CD4-positive, alpha-beta memory T cell (primary cell): ENCODE measurements at regions of chr1 and their contacts with region 1.

Region 1: GRCh38 chr1:169601093-169601881 is 15.0 kb upstream of the F5 start:
- DNase-seq: peak in 4 of 5 donors; percentile 21 to 34 (median 30)
- H3K4me3 ChIP-seq: no peak overlapping the region
- H3K4me3 Mint-ChIP-seq: peak overlapping the region in 4 of 8 donors; percentile 15 to 66 (median 20)
- H3K27ac ChIP-seq: no peak overlapping the region
- H3K27ac Mint-ChIP-seq: peak overlapping the region; percentile 39 to 86 (median 67)
- H3K4me1 ChIP-seq: peaks cover 53% of the 10 kb centered on the region
- H3K4me1 Mint-ChIP-seq: peaks cover 38 to 58% (median 49%) of the 10 kb centered on the region in 4 donors
- H3K27me3 ChIP-seq: no peaks in the 10 kb centered on the region
- H3K27me3 Mint-ChIP-seq: no peaks in the 10 kb centered on the region

Region 2: DNA sequence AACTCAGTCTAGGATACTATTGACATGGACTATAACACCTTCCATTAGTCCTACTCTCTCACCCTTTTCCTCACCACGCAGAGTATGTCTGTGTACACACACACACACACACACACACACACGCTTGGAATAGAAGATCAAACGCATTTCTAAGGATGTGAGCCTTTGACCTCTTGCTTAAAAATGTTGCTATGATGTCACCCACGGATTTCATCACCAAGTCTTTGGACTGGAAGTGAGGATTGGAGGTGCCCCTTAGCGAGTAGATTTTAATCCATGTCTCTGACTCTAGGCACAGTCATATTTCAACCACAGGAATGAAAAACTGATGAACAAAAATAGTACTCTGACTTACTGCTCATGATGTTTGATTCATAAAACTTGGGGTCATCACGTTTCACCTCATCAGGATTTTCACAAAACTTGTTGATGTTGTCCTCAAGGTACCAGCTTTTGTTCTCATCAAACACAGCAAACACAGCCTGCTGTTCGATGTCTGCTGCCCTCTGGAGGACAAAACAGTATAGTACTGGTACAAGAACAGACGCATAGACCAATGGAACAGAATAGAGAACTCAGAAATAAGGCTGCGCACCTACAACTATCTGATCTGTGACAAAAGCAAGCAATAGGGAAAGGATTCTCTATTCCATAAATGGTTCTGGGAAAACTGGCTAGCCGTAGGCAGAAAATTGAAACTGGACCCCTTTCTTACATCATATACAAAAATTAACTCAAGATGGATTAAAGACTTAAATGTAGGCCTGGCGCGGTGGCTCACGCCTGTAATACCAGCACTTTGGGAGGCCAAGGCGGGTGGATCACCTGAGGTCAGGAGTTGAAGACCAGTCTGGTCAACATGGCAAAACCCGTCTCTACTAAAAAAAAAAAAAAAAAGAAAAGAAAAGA is 54.9 kb before region 1 on chr1:
- CTCF ChIA-PET with region 1: interaction called, 59 read pairs
- POLR2A ChIA-PET with region 1: no interaction called
- intact Hi-C with region 1: loop called (anchors 1 kb)
- DNase-seq: peak; percentile 65 to 68 (median 66)
- H3K4me3 ChIP-seq: no peak overlapping the region
- H3K4me3 Mint-ChIP-seq: no peak overlapping the region
- H3K27ac ChIP-seq: no peak overlapping the region
- H3K27ac Mint-ChIP-seq: no peak overlapping the region
- H3K4me1 ChIP-seq: no peaks in the 10 kb centered on the region
- H3K4me1 Mint-ChIP-seq: peaks cover 0 to 2% (median under 1%) of the 10 kb centered on the region in 4 donors
- H3K27me3 ChIP-seq: no peaks in the 10 kb centered on the region
- H3K27me3 Mint-ChIP-seq: no peaks in the 10 kb centered on the region

Region 3: DNA sequence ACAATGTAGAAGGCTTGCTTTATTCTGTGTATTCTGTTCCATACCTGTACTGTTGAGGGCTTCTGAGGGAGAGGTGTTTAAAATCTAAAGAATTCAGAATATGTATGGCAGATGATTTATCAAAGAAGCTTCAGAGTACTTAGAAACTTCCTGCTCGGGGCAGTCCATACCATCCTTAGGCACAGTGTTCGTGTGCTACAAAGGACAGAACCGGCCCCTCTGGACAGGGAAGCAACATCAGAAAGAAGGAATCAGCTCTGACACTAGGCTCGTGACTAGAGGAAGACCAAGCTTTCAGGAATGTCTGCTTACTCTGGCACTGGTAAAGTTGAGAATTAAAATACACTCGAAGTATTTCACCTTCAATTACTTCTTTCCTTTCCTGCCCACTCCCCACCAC is 14.5 kb after region 1 on chr1:
- CTCF ChIA-PET with region 1: interaction called, 24 read pairs
- POLR2A ChIA-PET with region 1: interaction called, 4 read pairs
- intact Hi-C with region 1: no loop called
- DNase-seq: no peak
- H3K4me3 ChIP-seq: no peak overlapping the region
- H3K4me3 Mint-ChIP-seq: no peak overlapping the region
- H3K27ac ChIP-seq: no peak overlapping the region
- H3K27ac Mint-ChIP-seq: no peak overlapping the region
- H3K4me1 ChIP-seq: no peaks in the 10 kb centered on the region
- H3K4me1 Mint-ChIP-seq: peaks cover 3 to 5% (median 4%) of the 10 kb centered on the region in 4 donors
- H3K27me3 ChIP-seq: no peaks in the 10 kb centered on the region
- H3K27me3 Mint-ChIP-seq: no peaks in the 10 kb centered on the region

Region 4: GRCh38 chr1:169670836-169671235 is 69.5 kb after region 1 on chr1:
- CTCF ChIA-PET with region 1: interaction called, 21 read pairs
- POLR2A ChIA-PET with region 1: interaction called, 5 read pairs
- intact Hi-C with region 1: no loop called
- DNase-seq: no peak
- H3K4me3 ChIP-seq: no peak overlapping the region
- H3K4me3 Mint-ChIP-seq: peak overlapping the region in 6 of 8 donors; percentile 25 to 73 (median 30)
- H3K27ac ChIP-seq: no peak overlapping the region
- H3K27ac Mint-ChIP-seq: peak overlapping the region; percentile 66 to 88 (median 81)
- H3K4me1 ChIP-seq: peaks cover 46% of the 10 kb centered on the region
- H3K4me1 Mint-ChIP-seq: peaks cover 36 to 67% (median 55%) of the 10 kb centered on the region in 4 donors
- H3K27me3 ChIP-seq: no peaks in the 10 kb centered on the region
- H3K27me3 Mint-ChIP-seq: no peaks in the 10 kb centered on the region

Region 5: GRCh38 chr1:169689395-169689794 is 88.1 kb after region 1 on chr1:
- CTCF ChIA-PET with region 1: interaction called, 209 read pairs
- POLR2A ChIA-PET with region 1: interaction called, 216 read pairs
- intact Hi-C with region 1: loop called (anchors 1 kb)
- DNase-seq: no peak
- H3K4me3 ChIP-seq: no peak overlapping the region
- H3K4me3 Mint-ChIP-seq: peak overlapping the region in 3 of 8 donors; percentile 20 to 55 (median 49)
- H3K27ac ChIP-seq: peak overlapping the region; percentile 36
- H3K27ac Mint-ChIP-seq: peak overlapping the region in 6 of 7 donors; percentile 71 to 93 (median 89)
- H3K4me1 ChIP-seq: peaks cover 79% of the 10 kb centered on the region
- H3K4me1 Mint-ChIP-seq: peaks cover 46 to 59% (median 51%) of the 10 kb centered on the region in 4 donors
- H3K27me3 ChIP-seq: no peaks in the 10 kb centered on the region
- H3K27me3 Mint-ChIP-seq: no peaks in the 10 kb centered on the region

Region 6: GRCh38 chr1:169809370-169810095 is 208.2 kb after region 1 on chr1:
- CTCF ChIA-PET with region 1: interaction called, 26 read pairs
- POLR2A ChIA-PET with region 1: no interaction called
- intact Hi-C with region 1: loop called (anchors 1 kb)
- DNase-seq: peak in 4 of 5 donors; percentile 31 to 37 (median 34)
- H3K4me3 ChIP-seq: no peak overlapping the region
- H3K4me3 Mint-ChIP-seq: no peak overlapping the region
- H3K27ac ChIP-seq: no peak overlapping the region
- H3K27ac Mint-ChIP-seq: peak overlapping the region in 1 of 7 donors; percentile 38
- H3K4me1 ChIP-seq: no peaks in the 10 kb centered on the region
- H3K4me1 Mint-ChIP-seq: peaks cover 0 to 1% (median 0%) of the 10 kb centered on the region in 4 donors
- H3K27me3 ChIP-seq: no peaks in the 10 kb centered on the region
- H3K27me3 Mint-ChIP-seq: no peaks in the 10 kb centered on the region